GM18951 (cell line): ENCODE measurements at regions of chr1 and their contacts with region 1.

Region 1: GRCh38 chr1:160006312-160006940 is 25.4 kb downstream of the PIGM start:
- POLR2A ChIP-seq: no peak

Region 2: GRCh38 chr1:159686599-159687299 is 319.7 kb before region 1 on chr1:
- in situ Hi-C with region 1: no loop called
- POLR2A ChIP-seq: no peak

Region 3: GRCh38 chr1:159780583-159781582 is 225.5 kb before region 1 on chr1 and contains the start of gene DUSP23:
- in situ Hi-C with region 1: loop called (anchors 10 kb)
- POLR2A ChIP-seq: peak; percentile 59

Region 4: DNA sequence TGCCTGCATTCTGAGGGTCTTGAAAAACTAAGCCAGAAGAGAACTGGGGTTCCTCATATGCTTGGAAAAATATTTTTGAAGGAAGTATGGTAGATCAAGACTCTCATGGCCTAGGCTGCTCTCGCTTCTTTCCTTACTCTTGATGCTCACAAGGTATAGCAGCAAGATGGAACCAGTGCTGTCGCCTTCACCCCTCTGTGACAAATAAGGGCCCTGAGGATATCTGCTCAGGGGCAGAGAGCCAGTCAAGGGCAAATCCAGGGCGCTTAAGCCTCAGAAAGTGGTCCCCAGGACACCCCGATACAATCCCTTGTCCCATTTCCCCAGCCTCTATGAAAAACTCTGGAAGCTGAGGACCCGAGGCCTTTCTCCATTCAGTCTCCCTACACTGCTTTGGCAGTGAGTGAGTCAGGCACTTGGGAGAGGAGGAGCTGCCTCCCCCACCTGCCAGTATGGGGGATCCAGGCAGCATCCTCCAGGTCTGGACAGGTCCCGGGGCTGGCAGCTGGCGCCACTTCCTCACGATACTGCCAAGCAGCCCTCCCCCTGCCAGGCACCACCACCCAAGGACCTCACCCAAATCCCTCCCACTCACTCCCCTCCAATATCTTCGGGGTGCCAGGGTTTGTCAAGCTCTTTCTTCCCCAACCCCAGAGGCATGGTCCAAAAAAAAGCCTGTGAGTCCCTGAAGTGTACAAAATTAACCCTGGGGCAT is 62.4 kb before region 1 on chr1:
- in situ Hi-C with region 1: loop called (anchors 5 kb)
- POLR2A ChIP-seq: no peak